ENCODE measurements at regions of chr17 and their contacts with region 1.

Region 1: DNA sequence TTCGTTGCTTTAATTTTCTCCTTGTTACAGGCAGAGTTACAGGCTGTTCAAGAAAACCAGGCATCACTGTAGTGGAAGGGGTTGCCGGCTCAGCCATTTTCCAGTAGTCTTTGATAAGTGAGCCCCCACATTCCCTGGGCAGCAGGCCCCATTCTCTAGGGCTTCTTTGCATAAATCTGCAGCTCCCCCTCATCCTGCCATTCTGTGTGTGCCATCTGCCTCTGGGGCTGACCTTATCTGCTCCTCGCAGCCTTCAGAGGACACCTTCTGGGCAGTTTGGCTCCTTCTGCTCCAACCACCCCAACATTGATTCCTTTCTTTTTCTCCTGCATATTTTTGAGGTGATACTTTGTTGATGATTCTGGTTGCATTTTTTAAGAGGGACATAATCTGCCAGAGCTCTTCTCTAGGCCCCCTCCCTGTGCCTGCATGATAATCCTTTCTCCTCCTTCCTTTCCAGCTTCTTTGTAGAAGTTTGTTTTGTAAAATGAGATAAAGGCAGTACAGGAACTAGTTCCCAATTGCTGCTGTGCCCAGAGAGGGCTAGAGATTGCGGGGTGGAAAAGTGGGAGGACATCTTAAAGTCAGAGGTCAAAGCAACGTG is 17.1 kb downstream of the RND2 start:
- DNase-seq: no peak
- ATAC-seq: no peak
- H3K4me3 ChIP-seq: no peak overlapping the region
- H3K27ac ChIP-seq: no peak overlapping the region
- H3K4me1 ChIP-seq: no peaks in the 10 kb centered on the region
- H3K27me3 ChIP-seq: no peaks in the 10 kb centered on the region
- CTCF ChIP-seq: no peak
- POLR2A ChIP-seq: no peak

Region 2: GRCh38 chr17:42985225-42985624 is 56.9 kb before region 1 on chr17:
- intact Hi-C with region 1: no loop called
- DNase-seq: no peak
- ATAC-seq: peak in 1 of 4 donors; percentile 29
- H3K4me3 ChIP-seq: peak overlapping the region in 1 of 12 donors; percentile 35
- H3K27ac ChIP-seq: peak overlapping the region in 2 of 12 donors; percentile 22 to 86
- H3K4me1 ChIP-seq: peaks cover 0 to 42% (median 13%) of the 10 kb centered on the region in 12 donors
- H3K27me3 ChIP-seq: no peaks in the 10 kb centered on the region
- CTCF ChIP-seq: no peak
- POLR2A ChIP-seq: no peak

Region 3: GRCh38 chr17:43094129-43094835 is 52.2 kb after region 1 on chr17:
- intact Hi-C with region 1: loop called in 1 of 10 experiments (anchors 10 kb)
- DNase-seq: no peak
- ATAC-seq: no peak
- H3K4me3 ChIP-seq: no peak overlapping the region
- H3K27ac ChIP-seq: no peak overlapping the region
- H3K4me1 ChIP-seq: peaks cover 0 to 8% (median 0%) of the 10 kb centered on the region in 12 donors
- H3K27me3 ChIP-seq: no peaks in the 10 kb centered on the region
- CTCF ChIP-seq: no peak
- POLR2A ChIP-seq: no peak

Region 4: DNA sequence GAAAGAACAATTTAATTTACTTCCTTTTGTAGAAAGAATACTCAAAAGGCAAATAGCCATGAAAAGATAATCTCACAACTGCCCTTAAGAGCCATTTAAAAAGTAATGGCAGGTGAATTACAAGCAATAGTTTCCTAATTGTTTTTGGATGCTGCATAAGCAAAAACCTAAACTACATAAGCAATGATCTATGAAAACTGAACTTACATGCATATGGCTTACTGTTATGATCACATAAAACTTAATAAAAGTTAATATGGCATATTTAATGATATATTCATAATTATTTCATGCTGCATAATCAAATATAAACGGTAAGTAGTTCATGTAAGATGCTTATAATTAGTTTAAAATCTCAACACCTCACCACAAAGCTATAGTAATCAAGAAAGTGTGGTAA is 64.4 kb after region 1 on chr17:
- intact Hi-C with region 1: no loop called
- DNase-seq: no peak
- ATAC-seq: no peak
- H3K4me3 ChIP-seq: no peak overlapping the region
- H3K27ac ChIP-seq: no peak overlapping the region
- H3K4me1 ChIP-seq: peaks cover 0 to 5% (median 0%) of the 10 kb centered on the region in 12 donors
- H3K27me3 ChIP-seq: no peaks in the 10 kb centered on the region
- CTCF ChIP-seq: no peak
- POLR2A ChIP-seq: no peak

Measured in heart left ventricle (tissue), 16 donors.